ENCODE measurements at regions of chr5 and their contacts with region 1.

Region 1: GRCh38 chr5:149141224-149141956 is at the start of gene ABLIM3:
- DNase-seq: peak; percentile 43 to 72
- ATAC-seq: peak; percentile 73 to 82
- H3K4me3 ChIP-seq: peak within 1 kb of the TSS; percentile 87 to 93 (median 91)
- H3K27ac ChIP-seq: peak within 1 kb of the TSS; percentile 86 to 91 (median 88)
- H3K4me1 ChIP-seq: peaks cover 26% of the 10 kb centered on the region in 2 donors
- H3K27me3 ChIP-seq: no peaks in the 10 kb centered on the region
- CTCF ChIP-seq: peak; percentile 85 to 96 (median 96)
- POLR2A ChIP-seq: peak; percentile 36 to 53
- total RNA-seq, gene ABLIM3: 37.5 to 155 (median 67.7) TPM

Region 2: GRCh38 chr5:148776780-148777179 is 364.6 kb before region 1 on chr5:
- in situ Hi-C with region 1: no loop called
- intact Hi-C with region 1: no loop called
- DNase-seq: no peak
- ATAC-seq: no peak
- H3K4me3 ChIP-seq: no peak overlapping the region
- H3K27ac ChIP-seq: no peak overlapping the region
- H3K4me1 ChIP-seq: no peaks in the 10 kb centered on the region
- H3K27me3 ChIP-seq: no peaks in the 10 kb centered on the region
- CTCF ChIP-seq: no peak
- POLR2A ChIP-seq: no peak

Region 3: DNA sequence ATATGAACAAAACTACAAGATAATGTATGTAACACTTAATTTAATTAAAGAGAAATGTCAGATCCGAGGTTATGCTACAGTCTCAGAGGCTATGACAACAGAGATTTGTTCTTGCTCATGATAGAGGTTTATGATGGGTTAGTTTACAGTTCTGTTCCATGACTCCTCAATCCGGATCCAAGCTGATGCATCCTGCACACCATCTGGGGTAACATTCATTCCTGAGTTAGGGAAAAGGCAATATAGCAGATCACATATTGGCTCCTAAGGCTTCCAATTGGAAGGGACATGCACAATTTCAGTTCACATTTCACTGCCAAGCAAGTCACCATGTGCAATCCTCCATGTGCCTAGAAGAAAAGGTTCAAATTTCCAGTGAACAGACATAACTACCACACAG is 40.3 kb after region 1 on chr5:
- in situ Hi-C with region 1: no loop called
- intact Hi-C with region 1: loop called (anchors 2 kb)
- DNase-seq: no peak
- ATAC-seq: no peak
- H3K4me3 ChIP-seq: no peak overlapping the region
- H3K27ac ChIP-seq: no peak overlapping the region
- H3K4me1 ChIP-seq: peaks cover 23 to 28% of the 10 kb centered on the region in 2 donors
- H3K27me3 ChIP-seq: no peaks in the 10 kb centered on the region
- CTCF ChIP-seq: no peak
- POLR2A ChIP-seq: no peak

Region 4: DNA sequence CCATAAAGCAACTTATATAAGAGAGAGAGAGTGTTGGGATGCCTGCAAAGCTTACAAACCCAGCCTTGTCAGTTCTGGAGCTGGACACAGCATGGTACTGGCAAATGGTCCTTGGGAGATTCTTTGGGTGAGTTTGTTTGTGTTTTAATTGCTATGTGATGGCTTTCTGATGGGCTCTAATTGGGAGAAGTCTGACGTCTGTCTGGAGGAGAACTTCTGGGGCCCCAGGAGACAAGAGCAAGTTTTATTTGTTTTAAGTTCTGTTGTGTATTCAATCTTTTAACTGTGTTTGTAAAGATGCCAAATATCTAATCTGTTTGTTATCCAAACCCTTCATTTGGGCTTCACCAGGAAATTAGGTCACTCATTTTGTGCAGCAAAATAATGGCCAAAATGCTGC is 79.9 kb after region 1 on chr5:
- in situ Hi-C with region 1: loop called (anchors 5 to 25 kb)
- intact Hi-C with region 1: no loop called
- DNase-seq: no peak
- ATAC-seq: no peak
- H3K4me3 ChIP-seq: no peak overlapping the region
- H3K27ac ChIP-seq: peak overlapping the region in 3 of 4 donors; percentile 12 to 55 (median 36)
- H3K4me1 ChIP-seq: peaks cover 0 to 17% of the 10 kb centered on the region in 2 donors
- H3K27me3 ChIP-seq: no peaks in the 10 kb centered on the region
- CTCF ChIP-seq: no peak
- POLR2A ChIP-seq: no peak

Region 5: GRCh38 chr5:149228618-149229297 is 87.4 kb after region 1 on chr5:
- in situ Hi-C with region 1: loop called (anchors 5 to 25 kb)
- intact Hi-C with region 1: loop called (anchors 1 kb)
- DNase-seq: peak; percentile 53 to 69
- ATAC-seq: peak; percentile 99
- H3K4me3 ChIP-seq: no peak overlapping the region
- H3K27ac ChIP-seq: peak overlapping the region; percentile 17 to 70 (median 52)
- H3K4me1 ChIP-seq: peaks cover 14 to 17% of the 10 kb centered on the region in 2 donors
- H3K27me3 ChIP-seq: no peaks in the 10 kb centered on the region
- CTCF ChIP-seq: peak; percentile 75 to 92 (median 82)
- POLR2A ChIP-seq: no peak

Region 6: DNA sequence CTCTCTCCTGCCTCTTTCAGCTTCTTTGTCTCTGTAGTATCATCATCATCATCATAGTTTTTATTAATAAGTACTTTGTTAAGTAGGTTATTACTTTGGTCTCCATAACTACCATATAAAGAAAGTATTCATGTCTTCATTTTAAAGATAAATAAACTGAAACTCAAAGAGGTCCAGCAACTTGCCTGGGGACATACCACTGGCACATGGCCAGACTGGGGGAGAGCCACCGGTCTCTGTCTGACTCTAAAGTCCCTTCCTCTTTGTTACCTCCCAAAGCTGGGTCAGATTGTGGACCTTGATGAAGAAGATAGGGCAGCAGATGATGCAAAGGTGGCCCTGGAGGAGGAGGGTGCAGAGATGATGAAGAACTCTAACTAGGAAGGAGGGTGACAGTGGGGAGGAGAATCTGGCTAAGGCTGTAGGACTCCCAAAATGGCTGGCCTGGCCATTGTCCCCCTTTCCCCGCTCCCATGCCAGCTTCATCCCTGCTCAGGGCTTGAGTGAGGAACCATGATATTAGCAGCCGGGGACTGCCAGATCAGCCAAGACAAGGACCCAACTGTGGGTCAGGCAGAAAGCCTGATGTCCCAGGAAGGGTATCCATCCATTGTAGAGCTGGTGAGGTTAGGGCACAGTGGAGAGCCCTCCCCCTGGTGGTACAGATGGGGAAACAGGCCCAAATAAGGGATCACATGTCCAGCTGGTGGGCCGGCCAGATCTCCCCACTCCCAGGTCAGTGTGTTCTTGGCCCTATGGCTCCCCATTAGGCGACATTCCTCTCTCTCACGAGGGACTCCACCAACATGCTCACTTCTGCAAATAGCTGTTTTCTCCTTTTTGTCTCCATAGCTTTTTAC is 1033.9 kb after region 1 on chr5:
- in situ Hi-C with region 1: no loop called
- intact Hi-C with region 1: no loop called
- DNase-seq: no peak
- ATAC-seq: no peak
- H3K4me3 ChIP-seq: no peak overlapping the region
- H3K27ac ChIP-seq: no peak overlapping the region
- H3K4me1 ChIP-seq: peaks cover 9% of the 10 kb centered on the region in 2 donors
- H3K27me3 ChIP-seq: no peaks in the 10 kb centered on the region
- CTCF ChIP-seq: no peak
- POLR2A ChIP-seq: no peak